SK-MEL-5 (cell line): ENCODE measurements at regions of chr6 and their contacts with region 1.

Region 1: GRCh38 chr6:18387061-18387721 is at the start of gene RNF144B:
- DNase-seq: peak; percentile 94
- total RNA-seq, gene RNF144B: 12.2 and 14.3 TPM in 2 replicates

Region 2: GRCh38 chr6:18477301-18477941 is 90.2 kb after region 1 on chr6:
- in situ Hi-C with region 1: loop called (anchors 25 kb)
- DNase-seq: no peak

Region 3: GRCh38 chr6:18693881-18694280 is 306.7 kb after region 1 on chr6:
- in situ Hi-C with region 1: no loop called
- DNase-seq: no peak